Cardiac septum (tissue), 1 donor: ENCODE measurements at regions of chr3 and their contacts with region 1.

Region 1: GRCh38 chr3:69353503-69353902 is 32.4 kb downstream of the FRMD4B start:
- DNase-seq: no peak

Region 2: DNA sequence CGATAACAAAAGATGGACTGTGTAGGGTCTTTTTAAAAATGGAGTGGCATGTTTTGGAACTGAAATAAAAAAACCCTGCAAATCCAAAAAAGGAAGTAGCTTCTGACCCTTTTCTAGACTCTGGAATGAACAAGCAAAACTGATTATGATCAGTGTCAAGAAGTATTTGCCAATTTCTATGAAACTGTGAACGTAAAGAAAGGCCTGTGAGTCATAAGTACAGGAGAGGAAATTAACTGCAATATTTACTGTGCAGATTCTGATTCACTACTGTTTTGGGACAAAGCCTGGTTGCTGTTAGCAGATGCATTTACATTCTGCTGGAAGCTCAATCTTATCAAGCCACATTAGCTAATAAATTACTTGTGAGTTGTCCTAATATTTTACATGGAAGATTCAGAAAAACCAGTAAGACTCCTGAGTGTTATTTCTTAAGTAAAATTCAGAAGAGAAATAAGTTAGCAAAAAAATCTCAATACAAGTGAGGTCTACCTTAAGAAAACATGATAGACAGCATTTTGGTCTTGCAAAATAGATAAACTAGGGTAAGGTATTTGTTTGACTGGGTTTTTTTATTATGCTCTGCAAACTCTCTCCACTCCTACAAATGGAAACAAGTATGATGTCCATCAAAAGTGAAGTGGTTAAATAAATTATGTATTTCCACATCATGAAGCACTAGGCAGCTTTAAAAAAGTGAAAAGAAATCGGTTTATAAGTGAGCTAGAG is 140.9 kb before region 1 on chr3:
- intact Hi-C with region 1: no loop called
- DNase-seq: no peak

Region 3: DNA sequence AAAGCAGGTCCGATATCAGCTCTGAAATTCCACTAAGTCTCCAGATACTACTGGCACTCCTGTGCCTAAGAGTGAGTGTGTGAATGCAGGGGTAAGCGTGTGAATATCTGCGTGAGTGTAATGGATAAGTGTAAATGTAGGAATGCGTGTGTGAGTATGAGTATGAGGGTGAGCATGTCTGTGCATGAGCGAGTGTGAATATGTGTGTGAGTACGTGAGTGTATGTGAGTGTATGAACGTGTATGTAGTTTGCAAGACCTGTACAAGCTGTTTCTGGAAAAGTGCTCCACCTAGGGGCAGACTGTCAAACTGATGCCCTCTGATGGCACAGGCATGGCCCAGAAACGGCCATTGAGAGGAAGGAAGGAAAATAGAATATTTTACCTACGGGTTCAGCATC is 56.7 kb after region 1 on chr3:
- intact Hi-C with region 1: loop called (anchors 5 kb)
- DNase-seq: no peak

Region 4: DNA sequence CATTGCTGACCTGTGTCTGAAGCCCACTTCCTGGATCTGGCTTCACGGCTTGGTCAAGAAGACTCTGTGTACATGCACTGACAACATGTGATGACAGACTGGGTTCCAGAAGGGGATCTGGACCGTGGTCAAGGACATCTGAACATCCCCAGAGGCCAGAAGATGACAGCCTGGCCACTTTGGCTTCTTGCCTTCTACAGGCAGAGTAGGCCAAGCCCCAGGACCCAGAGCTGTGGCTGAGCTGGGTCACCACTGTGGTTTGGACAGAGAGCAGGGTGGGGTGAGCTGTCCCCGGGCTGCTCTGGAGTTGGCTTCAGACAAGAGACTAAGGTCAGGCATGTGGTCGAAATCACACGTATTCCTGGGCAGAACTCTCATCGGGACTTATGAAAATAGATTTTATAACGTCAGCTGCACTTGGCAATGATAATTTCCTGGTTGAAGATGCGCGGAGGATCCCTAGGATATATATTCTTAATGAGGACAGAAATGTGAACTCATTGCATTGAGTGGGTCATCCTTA is 146.5 kb after region 1 on chr3:
- intact Hi-C with region 1: no loop called
- DNase-seq: no peak

Region 5: GRCh38 chr3:69579306-69580041 is 226.0 kb after region 1 on chr3:
- intact Hi-C with region 1: no loop called
- DNase-seq: no peak

Region 6: DNA sequence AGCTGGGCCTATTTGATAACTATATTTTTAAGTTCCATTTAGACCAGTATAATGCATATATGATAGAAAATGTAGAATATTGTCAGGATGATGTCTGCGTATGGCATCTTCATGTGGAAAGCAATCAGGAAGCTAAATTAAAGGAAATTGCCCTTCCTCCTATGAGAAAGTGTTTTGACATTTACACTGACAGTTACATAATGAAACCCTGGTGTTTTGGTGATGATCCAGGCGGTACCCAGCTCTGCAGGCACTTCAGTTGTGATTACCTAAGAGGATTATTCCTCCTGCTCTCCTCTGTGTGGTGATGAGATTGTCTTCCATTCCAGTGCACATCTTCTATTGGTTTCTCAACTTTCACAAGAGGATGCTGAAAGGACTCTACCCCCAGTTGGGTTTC is 259.3 kb after region 1 on chr3:
- intact Hi-C with region 1: no loop called
- DNase-seq: no peak